RWPE1 (cell line): ENCODE measurements at regions of chr2 and their contacts with region 1.

Region 1: GRCh38 chr2:65122313-65122712 is 7.6 kb downstream of the RAB1A start:
- DNase-seq: no peak
- H3K27ac ChIP-seq: no peak overlapping the region
- CTCF ChIP-seq: no peak

Region 2: DNA sequence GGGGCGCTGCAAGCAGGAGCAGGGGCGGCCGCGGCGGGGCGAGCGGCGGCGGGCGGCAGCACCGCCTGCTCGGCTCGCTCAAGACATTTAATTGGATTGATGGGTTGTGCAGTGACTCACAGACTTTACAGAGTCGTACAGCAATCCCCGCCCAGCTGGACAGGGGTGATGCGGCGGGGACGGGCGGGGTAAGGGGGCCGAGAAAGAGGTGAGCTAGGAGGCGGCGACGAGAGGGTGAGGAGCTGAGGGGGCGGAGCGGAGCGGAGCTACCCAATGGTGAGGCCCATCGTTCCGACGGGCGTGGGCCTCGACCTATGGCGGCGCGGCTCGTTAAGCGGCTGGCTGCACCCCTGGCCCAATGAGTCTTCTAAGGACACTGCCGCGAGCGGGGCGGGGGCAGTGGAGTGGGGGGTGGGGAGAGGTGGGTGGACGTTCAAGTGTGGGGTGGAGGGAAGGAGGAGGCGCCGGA is 371.5 kb before region 1 on chr2:
- CTCF ChIA-PET with region 1: no interaction called
- POLR2A ChIA-PET with region 1: no interaction called
- DNase-seq: peak; percentile 99
- H3K27ac ChIP-seq: peak overlapping the region; percentile 98
- CTCF ChIP-seq: no peak

Region 3: DNA sequence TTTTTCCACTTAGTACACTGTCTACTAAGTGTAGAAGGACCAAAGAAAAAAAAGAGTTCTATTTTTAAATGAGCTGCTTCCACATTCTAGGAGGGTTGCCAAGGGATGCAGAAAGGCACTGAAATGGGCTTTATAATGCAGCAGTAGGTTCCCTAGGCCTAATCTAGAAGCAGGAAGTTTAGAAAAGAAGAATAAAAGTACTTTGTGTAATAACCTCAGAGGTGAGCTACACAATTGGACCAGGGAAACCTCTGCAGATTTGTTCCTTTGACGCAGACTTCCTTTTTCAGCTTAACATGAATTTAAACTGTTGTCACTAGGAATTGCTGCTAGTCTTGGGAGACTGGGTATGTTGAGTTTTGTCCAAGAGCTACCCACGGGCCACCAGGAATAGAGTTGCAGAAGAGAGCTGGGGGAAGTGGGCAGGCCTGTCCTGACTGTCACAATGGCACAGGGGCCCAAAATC is 42.1 kb after region 1 on chr2:
- CTCF ChIA-PET with region 1: interaction called, 12 read pairs
- POLR2A ChIA-PET with region 1: no interaction called
- DNase-seq: no peak
- H3K27ac ChIP-seq: no peak overlapping the region
- CTCF ChIP-seq: no peak

Region 4: GRCh38 chr2:65278531-65278981 is 156.2 kb after region 1 on chr2:
- CTCF ChIA-PET with region 1: no interaction called
- POLR2A ChIA-PET with region 1: no interaction called
- DNase-seq: no peak
- H3K27ac ChIP-seq: no peak overlapping the region
- CTCF ChIP-seq: no peak

Region 5: GRCh38 chr2:65630643-65631042 is 508.3 kb after region 1 on chr2:
- CTCF ChIA-PET with region 1: no interaction called
- POLR2A ChIA-PET with region 1: no interaction called
- DNase-seq: peak; percentile 54
- H3K27ac ChIP-seq: peak overlapping the region; percentile 78
- CTCF ChIP-seq: no peak